GM13976 (cell line): ENCODE measurements at regions of chr3 and their contacts with region 1.

Region 1: DNA sequence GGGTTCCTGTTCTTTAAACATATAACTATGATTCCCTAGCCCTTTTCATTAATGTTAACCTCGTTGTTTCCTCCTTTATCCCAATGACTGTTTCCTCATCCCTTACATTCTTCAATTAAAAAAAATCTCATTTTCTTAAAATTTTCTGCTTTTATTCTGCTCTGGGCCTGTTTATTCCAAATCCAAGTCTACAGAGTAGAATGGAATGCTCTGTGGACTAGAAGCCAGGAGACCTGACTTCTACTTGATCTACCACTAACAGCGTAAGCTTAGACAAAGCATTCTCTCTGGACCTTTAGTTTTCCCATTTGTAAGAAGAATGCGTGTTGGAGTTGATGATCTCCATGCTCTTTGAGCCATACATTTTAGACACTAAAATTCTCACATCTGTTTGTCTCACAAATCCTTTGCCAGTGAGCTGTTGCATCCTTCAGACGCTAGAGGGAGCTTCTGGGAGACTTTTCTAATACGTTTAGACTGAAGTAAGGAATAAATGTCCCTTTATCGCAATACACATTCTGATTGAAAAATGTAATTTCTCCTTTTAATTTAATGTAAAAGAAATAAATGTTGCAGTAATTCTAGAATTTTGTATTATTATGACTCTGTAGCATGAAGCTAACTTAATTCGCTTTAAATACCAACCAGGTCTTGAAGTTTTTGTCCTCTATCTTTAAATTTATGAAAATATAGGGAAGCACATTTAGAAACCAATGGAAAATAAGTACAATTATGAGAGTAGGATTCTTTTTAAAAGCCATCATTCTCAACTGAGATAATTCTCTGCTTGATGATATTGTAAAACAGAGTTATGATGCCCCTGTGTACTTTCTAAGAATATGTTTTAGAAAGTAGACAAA is 21.7 kb upstream of the GMNC start:
- DNase-seq: peak; percentile 51
- CTCF ChIP-seq: peak; percentile 84

Region 2: DNA sequence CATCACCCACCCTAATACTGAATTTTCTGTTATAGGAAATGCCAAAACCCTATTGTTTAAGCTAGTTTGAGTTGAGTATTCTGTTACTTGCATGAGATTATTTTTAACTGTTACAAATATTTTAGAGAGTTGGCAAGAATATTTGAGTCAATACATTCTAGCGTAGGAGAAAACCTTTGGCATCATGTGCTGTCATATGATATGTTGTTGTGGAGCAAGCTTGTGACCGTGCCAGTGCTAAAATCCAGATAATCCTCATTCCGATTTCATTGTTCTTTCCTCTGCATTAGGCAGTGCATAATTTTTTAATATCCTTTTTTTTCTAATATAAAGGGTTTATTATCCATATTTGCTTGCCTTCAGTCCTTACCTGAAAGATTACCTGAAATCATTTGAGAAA is 146.3 kb after region 1 on chr3:
- in situ Hi-C with region 1: loop called (anchors 25 kb)
- DNase-seq: no peak
- CTCF ChIP-seq: no peak